Panc1 (cell line): ENCODE measurements at regions of chr16 and their contacts with region 1.

Region 1: DNA sequence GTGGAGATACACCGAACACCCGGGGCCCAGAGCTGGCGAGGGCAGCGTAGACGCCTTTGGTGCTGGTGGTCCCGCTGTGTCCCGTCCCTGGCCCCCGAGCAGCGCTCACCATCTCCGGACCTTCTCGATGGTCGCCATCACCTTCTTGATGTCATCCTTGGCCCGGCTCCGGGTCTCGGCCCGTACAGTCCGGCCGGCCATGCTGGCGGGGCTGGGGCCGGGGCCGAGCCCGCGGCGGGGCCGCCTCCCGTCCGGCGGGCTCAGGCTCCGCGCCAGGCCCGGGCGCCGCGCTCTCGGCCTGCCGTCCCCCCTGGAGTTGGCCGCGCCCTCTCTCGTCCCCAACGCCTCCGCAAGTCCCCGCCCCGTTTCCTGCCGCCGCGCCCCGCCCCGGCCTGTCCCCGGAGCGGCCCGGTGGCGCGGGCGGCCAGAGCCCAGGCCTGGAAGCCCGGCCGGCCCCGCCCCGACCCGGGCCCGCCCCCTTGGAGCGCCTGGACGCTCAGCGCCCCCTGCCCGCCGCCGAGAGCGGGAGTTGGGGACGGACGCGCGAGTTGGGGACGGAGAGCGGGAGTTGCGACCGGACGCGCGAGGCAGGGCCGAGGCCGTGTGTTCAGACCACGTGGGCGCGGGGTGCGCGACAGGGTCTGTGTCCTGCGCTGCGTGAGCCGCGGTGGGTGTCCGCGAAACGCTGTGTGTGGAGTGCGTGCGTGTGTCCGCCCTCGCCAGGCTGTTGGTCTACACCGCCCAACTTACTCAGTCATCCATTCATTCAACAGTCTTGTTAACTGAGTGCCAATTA is at the start of gene BCL7C:
- DNase-seq: no peak
- ATAC-seq: peak; percentile 91
- H3K4me3 ChIP-seq: peak within 1 kb of the TSS; percentile 72 to 80
- H3K27ac ChIP-seq: peak within 1 kb of the TSS; percentile 87
- H3K4me1 ChIP-seq: peaks cover 24% of the 10 kb centered on the region
- H3K27me3 ChIP-seq: no peaks in the 10 kb centered on the region
- CTCF ChIP-seq: peak; percentile 89
- total RNA-seq, gene BCL7C: 45.8 TPM

Region 2: DNA sequence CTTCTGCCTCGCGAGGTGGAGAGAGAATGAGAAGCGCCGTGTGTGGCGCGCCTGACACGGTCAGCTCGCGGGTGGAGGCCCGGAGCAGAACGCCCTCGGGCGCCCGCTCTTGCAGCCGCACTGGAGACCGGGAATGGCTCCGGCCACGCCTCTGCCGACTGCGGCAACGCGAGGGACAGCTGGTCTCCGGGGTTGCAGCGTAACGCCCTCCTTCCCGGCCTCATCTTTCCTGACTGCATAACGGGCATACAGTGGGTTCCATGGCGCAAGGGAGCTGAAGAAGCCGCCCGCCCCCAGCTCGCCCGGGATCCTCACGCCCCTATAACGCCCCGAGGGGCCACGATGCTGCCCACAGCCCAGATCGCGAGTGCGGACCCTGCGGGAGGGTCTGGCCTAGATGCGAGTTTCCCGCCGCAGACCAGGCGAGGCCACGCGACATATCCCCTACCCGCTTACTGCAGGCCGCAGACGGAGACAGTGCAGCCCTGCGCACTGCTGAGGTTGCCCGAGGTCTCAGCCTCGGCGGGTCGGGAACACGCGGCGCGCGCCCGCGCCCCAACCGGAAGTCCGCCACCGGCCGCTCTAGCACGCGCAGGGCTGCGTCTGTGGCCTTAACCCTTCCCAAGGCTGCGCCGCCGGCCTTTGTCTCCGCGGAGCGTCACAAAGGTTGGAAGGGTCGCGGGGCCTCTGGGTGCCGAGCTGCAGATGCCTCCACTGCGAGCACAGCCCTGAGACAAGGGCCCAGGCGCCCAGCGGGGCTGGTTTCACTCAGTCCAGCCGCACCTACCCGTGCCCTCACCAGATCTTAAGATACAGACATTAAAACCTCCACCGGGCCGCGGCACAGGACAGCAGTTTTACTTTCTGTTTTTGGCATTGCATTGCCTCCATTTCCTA is 18.9 kb before region 1 on chr16:
- CTCF ChIA-PET with region 1: interaction called, 4 read pairs
- POLR2A ChIA-PET with region 1: interaction called, 13 read pairs
- in situ Hi-C with region 1: no loop called
- intact Hi-C with region 1: no loop called
- DNase-seq: peak; percentile 61
- ATAC-seq: peak; percentile 99
- H3K4me3 ChIP-seq: peak overlapping the region; percentile 72 to 87
- H3K27ac ChIP-seq: peak overlapping the region; percentile 95
- H3K4me1 ChIP-seq: peaks cover 11% of the 10 kb centered on the region
- H3K27me3 ChIP-seq: no peaks in the 10 kb centered on the region
- CTCF ChIP-seq: no peak

Region 3: DNA sequence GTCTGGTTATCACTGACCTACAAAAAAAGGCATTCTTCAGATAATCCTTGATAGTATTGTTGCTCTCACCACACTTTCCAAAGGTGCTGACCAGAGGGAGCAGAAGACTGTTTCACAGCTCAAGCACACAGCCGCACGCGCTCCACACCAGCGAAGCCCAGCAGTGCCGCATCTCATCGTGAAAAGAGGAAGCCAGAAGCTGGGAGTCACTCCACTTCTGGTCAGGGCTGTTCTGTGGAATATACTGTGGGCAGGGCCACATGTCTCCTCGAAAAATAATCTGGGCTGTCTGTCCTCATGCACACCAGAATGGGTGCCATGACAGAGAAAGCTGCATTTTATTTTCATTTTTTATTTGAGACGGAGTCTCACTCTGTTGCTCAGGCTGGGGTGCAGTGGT is 263.2 kb after region 1 on chr16:
- CTCF ChIA-PET with region 1: no interaction called
- POLR2A ChIA-PET with region 1: no interaction called
- in situ Hi-C with region 1: no loop called
- intact Hi-C with region 1: no loop called
- DNase-seq: no peak
- ATAC-seq: 0 out of 2 replicates have a peak, but pooled peaks have one; percentile 27
- H3K4me3 ChIP-seq: no peak overlapping the region
- H3K27ac ChIP-seq: no peak overlapping the region
- H3K4me1 ChIP-seq: no peaks in the 10 kb centered on the region
- H3K27me3 ChIP-seq: no peaks in the 10 kb centered on the region
- CTCF ChIP-seq: no peak

Region 4: GRCh38 chr16:31899505-31899904 is 1005.6 kb after region 1 on chr16:
- CTCF ChIA-PET with region 1: no interaction called
- POLR2A ChIA-PET with region 1: interaction called, 11 read pairs
- in situ Hi-C with region 1: no loop called
- intact Hi-C with region 1: no loop called
- DNase-seq: no peak
- ATAC-seq: no peak
- H3K4me3 ChIP-seq: no peak overlapping the region
- H3K27ac ChIP-seq: no peak overlapping the region
- H3K4me1 ChIP-seq: no peaks in the 10 kb centered on the region
- H3K27me3 ChIP-seq: no peaks in the 10 kb centered on the region
- CTCF ChIP-seq: no peak